ENCODE measurements at regions of chr14 and their contacts with region 1.

Region 1: GRCh38 chr14:70254476-70254961 is 65.8 kb upstream of the SLC8A3 start:
- DNase-seq: peak; percentile 63
- H3K4me3 ChIP-seq: peak overlapping the region in 2 of 3 experiments; percentile 50 to 55
- H3K27ac ChIP-seq: no peak overlapping the region
- H3K4me1 ChIP-seq: peaks cover 3% of the 10 kb centered on the region
- H3K27me3 ChIP-seq: no peaks in the 10 kb centered on the region
- CTCF ChIP-seq: no peak

Region 2: GRCh38 chr14:70045844-70046535 is 208.5 kb before region 1 on chr14:
- CTCF ChIA-PET with region 1: no interaction called
- dilution Hi-C with region 1: no loop called
- in situ Hi-C with region 1: no loop called
- intact Hi-C with region 1: loop called (anchors 1 kb)
- DNase-seq: peak; percentile 50
- H3K4me3 ChIP-seq: no peak overlapping the region
- H3K27ac ChIP-seq: peak overlapping the region; percentile 9
- H3K4me1 ChIP-seq: peaks cover 12% of the 10 kb centered on the region
- H3K27me3 ChIP-seq: no peaks in the 10 kb centered on the region
- CTCF ChIP-seq: peak; percentile 85 to 96

Region 3: GRCh38 chr14:70086685-70087379 is 167.7 kb before region 1 on chr14:
- CTCF ChIA-PET with region 1: interaction called, 3 read pairs
- dilution Hi-C with region 1: no loop called
- in situ Hi-C with region 1: no loop called
- intact Hi-C with region 1: loop called (anchors 1 kb)
- DNase-seq: peak; percentile 13
- H3K4me3 ChIP-seq: no peak overlapping the region
- H3K27ac ChIP-seq: no peak overlapping the region
- H3K4me1 ChIP-seq: no peaks in the 10 kb centered on the region
- H3K27me3 ChIP-seq: peaks cover 3% of the 10 kb centered on the region
- CTCF ChIP-seq: peak; percentile 57 to 78

Region 4: DNA sequence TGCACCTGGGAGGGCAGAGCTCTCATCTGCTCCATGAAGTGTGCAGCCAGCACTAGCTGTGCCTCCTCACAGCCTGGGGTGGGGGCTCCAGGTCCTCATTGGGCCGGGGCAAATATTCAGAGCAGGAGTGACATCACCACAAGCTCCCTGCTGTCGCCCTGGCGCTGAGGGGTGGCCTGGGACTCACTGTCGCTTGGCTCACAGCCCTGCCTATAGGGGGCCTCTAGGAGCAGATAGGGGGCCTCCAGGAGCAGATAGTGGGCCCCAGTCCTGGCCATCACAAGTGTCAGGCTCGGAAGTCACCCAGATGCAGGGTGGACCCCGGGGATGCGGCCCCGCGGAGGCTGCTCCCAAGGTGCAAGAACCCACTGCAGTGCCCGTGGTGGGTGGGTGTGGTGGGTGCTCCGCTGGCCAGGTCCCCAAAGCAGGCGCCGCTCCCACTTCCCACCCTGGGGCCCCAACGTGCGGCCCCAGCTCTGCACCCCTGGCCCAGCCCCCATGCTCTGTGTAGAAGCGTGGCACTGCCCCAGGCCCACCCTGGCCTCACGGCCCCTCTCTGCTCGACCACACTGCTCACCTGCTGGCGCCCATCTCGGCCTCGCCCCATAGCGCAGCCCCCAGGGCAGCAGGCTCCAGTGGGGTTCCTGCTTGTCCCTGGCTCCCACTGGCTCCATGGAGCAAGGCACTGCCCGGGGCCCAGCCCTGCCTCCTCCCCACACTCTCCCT is 144.3 kb after region 1 on chr14:
- CTCF ChIA-PET with region 1: no interaction called
- dilution Hi-C with region 1: no loop called
- in situ Hi-C with region 1: no loop called
- intact Hi-C with region 1: no loop called
- DNase-seq: no peak
- H3K4me3 ChIP-seq: no peak overlapping the region
- H3K27ac ChIP-seq: no peak overlapping the region
- H3K4me1 ChIP-seq: no peaks in the 10 kb centered on the region
- H3K27me3 ChIP-seq: no peaks in the 10 kb centered on the region
- CTCF ChIP-seq: no peak

Measured in mammary epithelial cell (primary cell).